Activated T-helper 1 cell treated with anti-CD3 and anti-CD28 coated beads, Interleukin-12 subunit alpha, Interleukin-12 subunit beta, Interleukin-2, Interleukin-4 antibody, amounts not matched to agents 30 ng/mL and 10 ng/mL and 1 ng/mL, durations not matched to agents 14 hours and 24 hours and 36 hours (primary cell): ENCODE measurements at regions of chr4 and their contacts with region 1.

Region 1: DNA sequence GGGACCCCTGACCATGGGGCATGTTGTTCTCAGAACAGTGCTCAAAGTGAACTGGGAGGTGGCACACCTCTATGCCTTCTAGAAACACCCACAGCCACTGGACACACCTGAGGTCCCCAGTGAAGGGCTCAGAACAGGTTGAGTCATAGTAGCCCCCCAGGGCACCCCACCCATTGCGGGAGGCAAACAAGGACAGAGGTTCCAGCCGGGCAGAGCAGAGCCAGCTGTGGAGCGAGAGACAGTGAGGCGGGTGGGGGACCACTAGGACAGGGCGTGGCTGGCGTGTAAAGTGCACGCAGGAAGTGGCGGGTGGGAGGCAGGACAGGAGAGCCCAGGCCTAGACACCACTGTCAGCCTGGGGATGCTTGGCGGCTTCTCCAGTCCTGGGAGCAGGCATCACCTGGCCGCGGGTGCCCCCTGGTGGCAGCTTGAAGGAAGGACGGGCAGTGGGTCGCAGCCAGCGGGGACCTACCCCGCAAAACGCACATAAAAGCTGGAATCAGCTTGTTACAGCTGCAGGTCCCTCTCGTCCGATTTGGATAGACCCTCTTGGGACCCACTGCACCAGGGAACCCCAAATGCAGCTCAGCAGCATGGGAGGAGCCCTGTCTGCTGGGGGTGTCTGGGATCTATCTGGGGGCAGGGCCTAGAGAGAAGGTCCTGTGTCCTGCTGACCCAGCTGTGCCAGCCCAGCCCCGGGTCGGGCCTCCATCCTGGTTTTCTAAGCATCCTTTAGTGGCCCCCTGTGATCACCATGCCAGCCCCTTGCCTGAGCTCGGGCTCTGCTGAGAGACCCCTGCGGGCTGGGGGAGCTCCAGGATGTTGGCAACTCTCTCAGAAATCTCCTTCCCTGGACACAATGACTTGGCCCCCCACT is 57.6 kb downstream of the WFS1 start:
- DNase-seq: peak; percentile 70
- H3K4me3 Mint-ChIP-seq: no peak overlapping the region
- H3K27ac Mint-ChIP-seq: no peak overlapping the region
- H3K4me1 Mint-ChIP-seq: peaks cover 18% of the 10 kb centered on the region
- H3K27me3 Mint-ChIP-seq: peaks cover 13% of the 10 kb centered on the region

Region 2: DNA sequence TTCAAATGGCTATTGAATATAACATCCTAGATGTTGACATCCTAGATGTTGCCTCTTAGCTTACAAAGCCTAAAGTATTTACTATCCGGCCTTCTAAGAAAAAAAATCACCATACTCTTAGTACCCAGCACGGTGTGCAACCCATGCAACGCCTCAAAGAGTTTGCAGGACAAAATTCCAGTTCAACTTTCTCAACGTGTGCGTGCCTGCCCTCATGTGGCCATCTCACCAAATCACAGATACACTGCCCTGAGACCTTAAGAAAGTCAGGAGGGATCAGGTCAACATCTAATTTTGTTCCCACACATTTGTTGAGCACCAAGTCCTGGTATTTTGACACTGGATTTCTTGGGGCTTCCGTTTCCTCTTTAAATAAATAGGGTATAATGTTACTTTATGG is 502.6 kb before region 1 on chr4:
- intact Hi-C with region 1: no loop called
- DNase-seq: no peak
- H3K4me3 Mint-ChIP-seq: no peak overlapping the region
- H3K27ac Mint-ChIP-seq: no peak overlapping the region
- H3K4me1 Mint-ChIP-seq: peaks cover 34% of the 10 kb centered on the region
- H3K27me3 Mint-ChIP-seq: peaks cover 8% of the 10 kb centered on the region

Region 3: DNA sequence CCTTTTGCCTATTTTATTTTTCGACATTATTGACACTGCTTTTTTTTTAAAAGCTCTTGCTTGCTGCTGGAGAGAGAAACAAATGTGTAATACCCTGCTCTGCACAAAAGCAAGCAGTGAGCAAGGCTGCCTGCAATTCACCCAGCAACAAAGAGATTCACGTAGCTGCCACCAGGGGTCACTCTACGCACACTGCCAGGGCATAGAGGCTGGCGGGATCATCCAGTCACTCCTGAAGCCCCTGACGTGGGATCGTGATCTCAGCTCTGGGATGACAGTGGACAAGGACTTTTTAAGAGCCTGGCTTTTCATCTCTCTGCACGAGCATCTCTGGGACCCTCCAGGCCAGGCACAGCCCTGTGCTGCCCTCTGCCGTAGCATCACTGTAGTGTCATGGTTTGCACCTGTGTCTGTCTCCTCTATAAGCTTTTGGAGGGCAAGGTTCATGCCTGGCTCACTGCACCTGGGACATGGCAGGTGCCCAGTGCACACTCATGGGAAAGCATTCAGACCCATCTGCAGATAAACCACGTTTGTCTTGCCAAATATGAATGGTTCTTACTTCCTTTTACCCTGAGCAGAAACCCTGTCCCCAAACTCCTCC is 328.8 kb before region 1 on chr4:
- intact Hi-C with region 1: loop called (anchors 1 kb)
- DNase-seq: peak; percentile 14
- H3K4me3 Mint-ChIP-seq: no peak overlapping the region
- H3K27ac Mint-ChIP-seq: no peak overlapping the region
- H3K4me1 Mint-ChIP-seq: peaks cover 20% of the 10 kb centered on the region
- H3K27me3 Mint-ChIP-seq: peaks cover 3% of the 10 kb centered on the region

Region 4: GRCh38 chr4:6076391-6076790 is 250.9 kb before region 1 on chr4:
- intact Hi-C with region 1: loop called (anchors 1 kb)
- DNase-seq: no peak
- H3K4me3 Mint-ChIP-seq: no peak overlapping the region
- H3K27ac Mint-ChIP-seq: no peak overlapping the region
- H3K4me1 Mint-ChIP-seq: no peaks in the 10 kb centered on the region
- H3K27me3 Mint-ChIP-seq: no peaks in the 10 kb centered on the region

Region 5: DNA sequence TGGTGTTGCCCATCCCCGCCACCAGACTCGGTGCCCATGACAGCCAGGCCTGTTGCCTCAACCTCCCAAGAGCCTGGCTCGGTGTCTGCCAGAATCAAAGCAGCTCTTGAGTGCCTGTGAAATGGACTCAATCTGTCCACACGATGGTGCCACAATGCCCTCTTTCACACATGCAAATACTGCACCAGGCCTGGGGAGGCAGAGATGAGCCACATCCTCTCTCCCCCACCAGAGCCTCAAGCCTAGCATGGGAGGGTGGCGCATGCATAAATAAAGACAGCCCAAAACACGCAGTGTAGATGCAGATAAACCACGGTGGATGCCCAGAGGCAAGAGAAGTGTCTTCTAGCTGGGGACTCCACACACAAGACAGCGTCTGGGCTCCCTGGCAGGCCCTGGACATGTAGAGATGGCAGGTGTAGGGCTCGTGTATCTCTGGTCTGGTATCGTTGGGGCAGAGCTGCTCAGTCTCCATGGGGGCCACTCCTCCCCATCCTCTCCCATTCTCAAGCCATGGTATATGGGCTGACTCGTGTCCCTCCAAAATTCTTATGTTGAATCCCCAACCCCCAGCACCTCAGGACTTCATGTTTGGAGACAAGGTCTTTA is 192.6 kb before region 1 on chr4:
- intact Hi-C with region 1: loop called (anchors 1 kb)
- DNase-seq: peak; percentile 46
- H3K4me3 Mint-ChIP-seq: no peak overlapping the region
- H3K27ac Mint-ChIP-seq: no peak overlapping the region
- H3K4me1 Mint-ChIP-seq: peaks cover 20% of the 10 kb centered on the region
- H3K27me3 Mint-ChIP-seq: no peaks in the 10 kb centered on the region

Region 6: DNA sequence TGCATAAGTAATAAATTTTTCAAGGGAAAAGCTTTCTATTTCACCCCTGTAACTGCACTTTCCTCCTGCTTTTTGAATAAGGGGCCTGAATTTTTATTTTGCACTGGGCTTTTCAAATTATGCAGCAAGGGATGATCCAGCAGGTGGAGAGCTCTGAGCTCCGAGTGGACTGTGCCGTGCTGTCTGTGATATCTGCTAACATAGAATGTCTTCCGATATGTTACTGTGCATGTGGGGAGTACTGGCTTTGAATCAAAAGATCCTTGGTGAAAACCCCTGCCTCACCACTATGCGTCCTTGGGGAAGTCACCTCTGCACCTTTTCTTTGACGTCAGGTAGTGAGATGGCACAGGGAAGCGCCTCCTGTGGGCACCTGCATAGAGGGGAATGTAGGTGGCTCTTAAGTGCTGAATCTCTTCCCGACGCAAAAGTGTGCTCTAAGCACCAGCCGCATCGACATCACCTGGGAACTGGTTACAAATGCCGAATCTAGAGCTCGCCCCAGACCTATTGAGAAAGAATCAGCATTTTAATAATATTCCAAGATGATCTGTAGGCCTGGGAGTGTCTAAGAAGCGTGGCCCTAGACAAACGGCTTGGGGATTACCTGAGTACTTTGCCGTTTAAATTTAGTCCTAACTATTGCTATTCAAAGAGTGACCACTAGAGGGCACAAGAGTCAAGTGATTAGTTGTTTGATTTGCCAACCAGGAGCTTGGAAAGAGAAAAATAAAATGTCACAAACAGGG is 76.9 kb before region 1 on chr4:
- intact Hi-C with region 1: loop called (anchors 1 kb)
- DNase-seq: peak; percentile 25
- H3K4me3 Mint-ChIP-seq: no peak overlapping the region
- H3K27ac Mint-ChIP-seq: no peak overlapping the region
- H3K4me1 Mint-ChIP-seq: peaks cover 8% of the 10 kb centered on the region
- H3K27me3 Mint-ChIP-seq: peaks cover 36% of the 10 kb centered on the region

Region 7: DNA sequence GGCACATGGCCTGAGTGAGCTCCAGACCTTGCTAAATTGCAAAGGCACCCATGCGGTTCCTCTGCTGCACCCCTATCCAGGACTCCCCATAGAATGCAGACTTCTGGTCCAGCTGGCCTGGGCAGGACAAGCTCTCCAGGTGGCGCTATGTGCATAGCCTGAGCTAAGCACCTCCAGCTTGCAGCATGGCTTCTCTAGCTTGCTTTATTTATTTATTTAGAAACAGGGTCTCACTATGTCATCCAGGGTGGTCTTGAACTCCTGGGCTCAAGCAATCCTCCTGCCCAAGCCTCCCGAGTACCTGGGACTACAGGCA is 63.1 kb before region 1 on chr4:
- intact Hi-C with region 1: loop called (anchors 1 kb)
- DNase-seq: no peak
- H3K4me3 Mint-ChIP-seq: no peak overlapping the region
- H3K27ac Mint-ChIP-seq: no peak overlapping the region
- H3K4me1 Mint-ChIP-seq: peaks cover 16% of the 10 kb centered on the region
- H3K27me3 Mint-ChIP-seq: peaks cover 43% of the 10 kb centered on the region

Region 8: DNA sequence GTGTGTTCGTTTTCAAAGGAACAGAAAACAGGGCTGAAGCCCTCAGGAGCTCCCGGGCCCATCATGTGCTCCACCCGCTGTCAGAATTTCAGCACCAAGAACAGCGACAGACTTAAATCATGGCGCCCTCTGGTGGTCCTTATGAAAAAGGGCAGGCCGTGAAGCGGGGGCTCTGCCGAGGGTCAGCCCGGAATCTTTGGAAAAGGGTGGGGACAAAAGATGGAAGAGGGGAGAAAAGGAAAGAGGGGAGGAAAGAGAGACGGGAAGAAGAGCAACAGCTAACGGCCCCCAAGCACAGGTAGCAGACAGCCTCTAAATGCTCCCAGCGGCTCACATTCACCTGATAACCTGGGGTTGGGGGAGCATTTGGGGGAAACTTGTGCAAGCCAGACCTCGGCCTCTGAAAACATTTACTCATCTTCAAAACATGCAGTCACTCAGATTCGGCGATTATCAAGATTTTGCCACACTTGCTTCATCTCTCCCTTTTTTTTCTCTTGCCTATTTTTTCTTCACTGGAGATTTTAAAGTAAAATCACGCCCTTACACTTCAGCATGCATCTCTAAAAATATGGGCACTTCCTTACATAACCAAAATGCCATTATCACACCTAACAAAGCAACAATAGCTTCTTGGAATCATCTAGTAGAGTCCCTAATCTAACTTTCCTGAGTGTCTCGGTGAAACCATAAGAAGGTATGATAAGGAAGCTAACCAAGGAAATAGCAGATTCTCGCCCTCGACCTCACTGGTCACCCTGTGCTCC is 219.6 kb after region 1 on chr4:
- intact Hi-C with region 1: loop called (anchors 1 kb)
- DNase-seq: peak; percentile 39
- H3K4me3 Mint-ChIP-seq: no peak overlapping the region
- H3K27ac Mint-ChIP-seq: no peak overlapping the region
- H3K4me1 Mint-ChIP-seq: no peaks in the 10 kb centered on the region
- H3K27me3 Mint-ChIP-seq: peaks cover 2% of the 10 kb centered on the region